ENCODE measurements at regions of chr12 and their contacts with region 1.

Region 1: GRCh38 chr12:103771466-103771865 is 69.6 kb downstream of the NT5DC3 start:
- DNase-seq: peak; percentile 28 to 58 (median 50)
- H3K4me3 ChIP-seq: no peak overlapping the region
- H3K27ac ChIP-seq: no peak overlapping the region
- H3K4me1 ChIP-seq: no peaks in the 10 kb centered on the region
- H3K27me3 ChIP-seq: no peaks in the 10 kb centered on the region

Region 2: DNA sequence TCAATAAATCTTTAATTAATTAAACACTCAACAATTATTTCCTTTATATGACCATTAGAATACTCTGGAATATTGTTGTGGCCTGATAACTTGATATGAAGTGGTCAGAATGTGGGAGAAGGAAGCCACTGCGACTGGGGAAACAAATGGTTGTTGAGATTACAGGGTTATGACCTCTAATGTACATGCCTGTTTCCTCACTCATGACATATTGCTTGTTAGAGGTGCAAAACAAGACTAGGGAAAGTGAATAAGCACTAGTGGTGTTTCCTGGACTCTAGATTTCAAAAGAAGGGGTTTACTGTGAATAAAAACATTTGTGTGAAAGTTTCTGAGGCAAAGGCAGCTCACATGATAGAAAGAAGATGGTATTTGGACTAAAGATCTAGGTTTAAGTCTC is 131.1 kb before region 1 on chr12:
- CTCF ChIA-PET with region 1: no interaction called
- POLR2A ChIA-PET with region 1: no interaction called
- DNase-seq: peak; percentile 40 to 76 (median 55)
- H3K4me3 ChIP-seq: no peak overlapping the region
- H3K27ac ChIP-seq: no peak overlapping the region
- H3K4me1 ChIP-seq: peaks cover 0 to 9% (median 0%) of the 10 kb centered on the region in 4 experiments
- H3K27me3 ChIP-seq: peaks cover 0 to 18% (median 2%) of the 10 kb centered on the region in 5 experiments

Region 3: DNA sequence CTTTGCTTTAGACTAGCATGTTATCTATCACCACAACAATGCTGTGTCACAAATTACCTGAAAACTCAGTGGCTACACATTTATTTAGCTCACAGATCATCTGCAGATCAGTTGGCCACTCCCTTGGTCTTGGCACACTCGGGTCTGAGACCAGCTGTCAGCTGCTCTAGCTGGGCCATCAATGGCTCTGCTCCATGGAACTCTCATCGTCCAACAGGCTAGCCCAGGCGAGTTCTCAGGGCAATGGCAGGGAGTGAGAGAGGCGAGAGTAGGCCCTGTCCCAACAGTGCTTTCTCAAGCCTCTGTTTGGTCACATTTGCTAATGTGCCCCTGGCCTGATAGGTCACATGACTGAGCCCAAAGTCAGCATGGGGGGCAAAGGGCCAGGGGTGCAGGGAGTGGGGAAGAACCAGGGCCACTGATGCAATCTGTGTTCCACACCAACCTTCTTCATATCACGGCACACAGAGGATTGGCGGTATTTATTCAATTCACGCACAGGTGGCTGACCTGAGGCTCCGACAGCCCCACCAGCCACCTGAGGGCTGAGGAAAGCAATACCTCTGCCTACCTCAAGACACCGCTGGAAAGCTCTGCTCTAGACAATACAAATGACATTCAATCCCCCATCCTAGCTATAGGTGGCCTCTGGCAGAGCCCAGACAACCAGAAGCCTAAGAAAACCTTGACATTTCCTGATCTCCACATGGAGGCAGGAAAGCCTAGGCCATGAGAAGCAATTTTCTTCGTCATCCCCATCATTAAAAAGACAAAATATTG is 13.0 kb before region 1 on chr12:
- CTCF ChIA-PET with region 1: interaction called, 14 read pairs
- POLR2A ChIA-PET with region 1: no interaction called
- DNase-seq: no peak
- H3K4me3 ChIP-seq: no peak overlapping the region
- H3K27ac ChIP-seq: no peak overlapping the region
- H3K4me1 ChIP-seq: no peaks in the 10 kb centered on the region
- H3K27me3 ChIP-seq: no peaks in the 10 kb centered on the region

Region 4: GRCh38 chr12:103851127-103851526 is 79.7 kb after region 1 on chr12:
- CTCF ChIA-PET with region 1: interaction called, 12 read pairs
- POLR2A ChIA-PET with region 1: no interaction called
- DNase-seq: no peak
- H3K4me3 ChIP-seq: no peak overlapping the region
- H3K27ac ChIP-seq: no peak overlapping the region
- H3K4me1 ChIP-seq: peaks cover 0 to 5% (median 0%) of the 10 kb centered on the region in 4 experiments
- H3K27me3 ChIP-seq: peaks cover 0 to 2% (median 0%) of the 10 kb centered on the region in 5 experiments

Region 5: GRCh38 chr12:103868215-103868614 is 96.7 kb after region 1 on chr12:
- CTCF ChIA-PET with region 1: interaction called, 72 read pairs
- POLR2A ChIA-PET with region 1: no interaction called
- DNase-seq: no peak
- H3K4me3 ChIP-seq: no peak overlapping the region
- H3K27ac ChIP-seq: no peak overlapping the region
- H3K4me1 ChIP-seq: no peaks in the 10 kb centered on the region
- H3K27me3 ChIP-seq: no peaks in the 10 kb centered on the region

Region 6: GRCh38 chr12:104427011-104427461 is 655.6 kb after region 1 on chr12:
- CTCF ChIA-PET with region 1: no interaction called
- POLR2A ChIA-PET with region 1: no interaction called
- DNase-seq: no peak
- H3K4me3 ChIP-seq: no peak overlapping the region
- H3K27ac ChIP-seq: no peak overlapping the region
- H3K4me1 ChIP-seq: no peaks in the 10 kb centered on the region
- H3K27me3 ChIP-seq: no peaks in the 10 kb centered on the region